CD14-positive monocyte (primary cell): ENCODE measurements at regions of chr17 and their contacts with region 1.

Region 1: GRCh38 chr17:68512247-68512982 is at the start of gene PRKAR1A:
- DNase-seq: peak; percentile 88 to 96 (median 90)
- H3K4me3 ChIP-seq: peak within 1 kb of the TSS; percentile 80 to 97 (median 90)
- H3K4me3 Mint-ChIP-seq: peak within 1 kb of the TSS; percentile 98 to 99
- H3K27ac ChIP-seq: peak within 1 kb of the TSS; percentile 81 to 98
- H3K27ac Mint-ChIP-seq: peak within 1 kb of the TSS; percentile 98 to 100 (median 100)
- H3K4me1 ChIP-seq: peaks cover 57 to 67% of the 10 kb centered on the region in 2 donors
- H3K4me1 Mint-ChIP-seq: peaks cover 61% of the 10 kb centered on the region
- H3K27me3 ChIP-seq: no peaks in the 10 kb centered on the region
- H3K27me3 Mint-ChIP-seq: peaks cover 0 to 5% (median 0%) of the 10 kb centered on the region in 3 donors
- CTCF ChIP-seq: no peak
- polyA plus RNA-seq, gene PRKAR1A: 91.9 to 436 (median 300) TPM

Region 2: GRCh38 chr17:68491381-68492231 is 20.8 kb before region 1 on chr17:
- intact Hi-C with region 1: loop called in 1 of 2 experiments (anchors 2 kb)
- DNase-seq: peak; percentile 81 to 88 (median 83)
- H3K4me3 ChIP-seq: peak overlapping the region in 1 of 3 experiments; percentile 55
- H3K4me3 Mint-ChIP-seq: peak overlapping the region; percentile 37 to 85
- H3K27ac ChIP-seq: peak overlapping the region; percentile 70 to 74
- H3K27ac Mint-ChIP-seq: peak overlapping the region; percentile 82 to 93 (median 91)
- H3K4me1 ChIP-seq: peaks cover 73 to 76% of the 10 kb centered on the region in 2 donors
- H3K4me1 Mint-ChIP-seq: peaks cover 75% of the 10 kb centered on the region
- H3K27me3 ChIP-seq: no peaks in the 10 kb centered on the region
- H3K27me3 Mint-ChIP-seq: peaks cover 0 to 4% (median 0%) of the 10 kb centered on the region in 3 donors
- CTCF ChIP-seq: no peak

Region 3: DNA sequence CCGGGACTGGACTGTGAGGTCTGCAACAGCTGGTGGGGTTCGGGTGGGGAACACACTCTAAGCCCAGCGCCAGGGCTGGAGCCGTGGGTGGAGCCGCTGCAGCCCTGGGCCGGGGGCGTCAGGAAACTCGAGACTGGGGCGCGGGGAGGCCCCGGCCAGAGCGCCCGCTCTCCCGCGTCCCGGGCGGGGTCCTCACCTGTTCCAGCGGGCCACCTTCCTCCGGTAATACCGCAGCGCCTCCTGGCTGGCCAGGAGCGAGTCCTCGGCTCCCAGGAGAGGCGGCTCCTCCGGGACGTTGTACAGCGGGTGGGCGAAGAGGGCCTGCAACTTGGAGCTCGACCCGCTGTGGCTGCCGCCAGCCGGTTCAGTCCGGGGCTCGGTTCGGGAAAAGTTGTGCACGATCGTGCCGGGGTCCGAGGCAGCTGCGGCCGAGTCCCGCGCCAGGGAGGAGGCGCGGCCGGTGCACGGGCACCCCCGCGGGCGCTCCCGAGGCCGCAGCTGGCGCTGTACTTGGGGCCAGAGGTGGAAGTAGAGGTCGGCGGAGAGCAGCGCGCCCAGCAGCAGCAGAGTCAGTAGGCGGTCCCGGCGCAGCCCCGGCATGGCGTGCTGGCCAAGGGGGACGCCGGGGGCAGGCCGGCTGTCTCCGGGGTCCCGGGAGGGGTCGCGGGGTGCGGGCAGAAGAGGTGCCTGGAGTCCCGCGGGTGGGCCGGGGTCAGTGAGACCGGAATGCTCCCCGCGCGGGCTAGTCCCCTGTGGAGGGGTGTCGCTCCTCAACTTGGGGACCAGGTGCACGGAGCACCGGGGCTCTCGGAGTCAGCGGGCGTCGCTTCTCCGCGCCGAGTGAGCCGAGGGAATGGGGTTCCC is 87.9 kb after region 1 on chr17:
- intact Hi-C with region 1: loop called (anchors 2 to 5 kb)
- DNase-seq: peak; percentile 12 to 46 (median 38)
- H3K4me3 ChIP-seq: peak overlapping the region; percentile 37 to 72 (median 45)
- H3K4me3 Mint-ChIP-seq: peak overlapping the region; percentile 86 to 91
- H3K27ac ChIP-seq: no peak overlapping the region
- H3K27ac Mint-ChIP-seq: peak overlapping the region in 3 of 7 donors; percentile 46 to 93 (median 82)
- H3K4me1 ChIP-seq: peaks cover 42 to 50% of the 10 kb centered on the region in 2 donors
- H3K4me1 Mint-ChIP-seq: peaks cover 47% of the 10 kb centered on the region
- H3K27me3 ChIP-seq: peaks cover 58 to 67% of the 10 kb centered on the region in 2 donors
- H3K27me3 Mint-ChIP-seq: peaks cover 52 to 67% (median 60%) of the 10 kb centered on the region in 3 donors
- CTCF ChIP-seq: no peak

Region 4: DNA sequence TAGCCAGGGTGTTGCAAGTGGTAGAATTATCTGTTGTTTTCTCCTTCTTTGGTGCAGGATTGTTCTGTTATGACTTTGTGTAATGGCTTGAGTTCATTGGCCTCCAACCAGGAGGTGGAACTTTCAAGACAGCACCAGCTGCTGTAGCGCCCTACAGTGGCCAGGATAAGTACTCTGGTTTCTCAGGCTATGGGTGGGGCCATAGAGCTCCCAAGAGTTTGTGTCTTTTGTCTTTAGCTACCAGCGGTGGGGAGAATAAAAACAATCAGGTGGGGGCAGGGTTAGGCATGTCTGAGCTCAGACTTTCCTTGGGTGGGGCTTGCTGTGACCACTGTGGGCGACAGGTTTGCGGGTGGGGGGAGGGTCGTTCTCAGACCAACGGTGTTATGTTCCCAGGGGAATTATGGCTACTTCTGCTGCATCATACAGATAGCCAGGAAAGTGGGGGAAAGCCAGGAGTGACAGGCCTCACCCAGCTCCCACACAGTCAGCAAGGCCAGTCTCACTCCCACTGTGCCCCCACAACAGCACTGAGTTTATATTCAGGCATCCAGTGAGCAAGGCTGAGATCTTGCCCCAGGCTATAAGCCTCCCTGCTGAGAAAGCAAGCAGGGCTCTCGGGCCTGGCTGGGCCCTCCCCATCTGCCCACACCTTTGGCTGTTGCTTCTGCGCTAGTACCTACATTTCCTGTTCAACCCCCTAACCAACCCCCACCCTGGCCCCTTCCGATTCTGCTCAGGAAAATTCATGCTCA is 700.8 kb after region 1 on chr17:
- intact Hi-C with region 1: no loop called
- DNase-seq: no peak
- H3K4me3 ChIP-seq: no peak overlapping the region
- H3K4me3 Mint-ChIP-seq: no peak overlapping the region
- H3K27ac ChIP-seq: no peak overlapping the region
- H3K27ac Mint-ChIP-seq: peak overlapping the region in 1 of 7 donors; percentile 16
- H3K4me1 ChIP-seq: no peaks in the 10 kb centered on the region
- H3K4me1 Mint-ChIP-seq: no peaks in the 10 kb centered on the region
- H3K27me3 ChIP-seq: no peaks in the 10 kb centered on the region
- H3K27me3 Mint-ChIP-seq: peaks cover 0 to 3% (median 2%) of the 10 kb centered on the region in 3 donors
- CTCF ChIP-seq: no peak

Region 5: DNA sequence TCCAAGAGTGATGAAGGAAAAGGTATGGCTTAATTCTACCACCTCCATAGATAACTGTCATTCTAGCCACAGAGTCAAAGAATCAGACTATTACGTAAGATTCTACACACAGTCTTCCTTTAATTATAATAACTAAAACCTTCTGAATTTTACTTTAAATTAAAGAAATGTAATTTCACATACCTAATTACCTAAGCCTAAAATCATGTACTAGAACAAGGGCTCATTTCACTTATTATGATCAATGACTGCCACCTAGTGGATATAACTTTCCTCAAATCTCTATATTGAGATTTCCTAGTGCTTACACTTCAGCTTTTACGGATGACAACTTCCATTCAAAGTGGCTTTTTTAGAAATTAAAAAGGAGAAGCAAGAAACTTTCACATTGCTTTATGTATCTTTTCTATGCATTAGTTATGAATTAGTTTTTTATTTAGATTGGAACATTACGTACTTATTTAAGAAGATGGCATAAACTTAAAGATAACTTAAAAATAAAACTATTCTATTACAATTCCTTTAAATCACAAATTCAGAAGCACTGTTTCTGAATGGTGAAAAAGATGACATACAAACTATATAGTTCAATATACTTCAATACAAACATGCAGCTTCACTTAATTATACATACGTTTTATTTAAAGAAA is 734.4 kb after region 1 on chr17:
- intact Hi-C with region 1: loop called in 1 of 2 experiments (anchors 10 kb)
- DNase-seq: peak; percentile 22 to 57 (median 33)
- H3K4me3 ChIP-seq: no peak overlapping the region
- H3K4me3 Mint-ChIP-seq: no peak overlapping the region
- H3K27ac ChIP-seq: no peak overlapping the region
- H3K27ac Mint-ChIP-seq: no peak overlapping the region
- H3K4me1 ChIP-seq: no peaks in the 10 kb centered on the region
- H3K4me1 Mint-ChIP-seq: peaks cover 2% of the 10 kb centered on the region
- H3K27me3 ChIP-seq: no peaks in the 10 kb centered on the region
- H3K27me3 Mint-ChIP-seq: no peaks in the 10 kb centered on the region
- CTCF ChIP-seq: peak; percentile 87